SK-N-SH (cell line): ENCODE measurements at regions of chr12 and their contacts with region 1.

Region 1: GRCh38 chr12:52884526-52885293 is 20.2 kb downstream of the KRT8 start:
- DNase-seq: peak; percentile 86
- H3K4me3 ChIP-seq: no peak overlapping the region; a peak in 1 of 4 replicates
- H3K27ac ChIP-seq: no peak overlapping the region
- H3K4me1 ChIP-seq: no peaks in the 10 kb centered on the region; a peak in 1 of 4 replicates
- H3K27me3 ChIP-seq: no peaks in the 10 kb centered on the region
- CTCF ChIP-seq: peak; percentile 98
- EP300 ChIP-seq: no peak
- RAD21 ChIP-seq: peak; percentile 93

Region 2: GRCh38 chr12:52380271-52380694 is 504.4 kb before region 1 on chr12:
- CTCF ChIA-PET with region 1: interaction called, 58 read pairs
- POLR2A ChIA-PET with region 1: no interaction called
- DNase-seq: peak; percentile 53
- H3K4me3 ChIP-seq: no peak overlapping the region
- H3K27ac ChIP-seq: no peak overlapping the region
- H3K4me1 ChIP-seq: no peaks in the 10 kb centered on the region; a peak in 1 of 4 replicates
- H3K27me3 ChIP-seq: peaks cover 75% of the 10 kb centered on the region
- CTCF ChIP-seq: peak; percentile 68
- EP300 ChIP-seq: no peak
- RAD21 ChIP-seq: peak; percentile 47

Region 3: GRCh38 chr12:52865090-52865944 is 19.4 kb before region 1 on chr12:
- CTCF ChIA-PET with region 1: interaction called, 30 read pairs
- POLR2A ChIA-PET with region 1: no interaction called
- DNase-seq: peak; percentile 87
- H3K4me3 ChIP-seq: peak overlapping the region in 1 of 2 experiments; percentile 17; a peak in 1 of 4 replicates
- H3K27ac ChIP-seq: no peak overlapping the region
- H3K4me1 ChIP-seq: no peaks in the 10 kb centered on the region; a peak in 1 of 4 replicates
- H3K27me3 ChIP-seq: peaks cover 12% of the 10 kb centered on the region; the same call in 1 of the 2 replicates
- CTCF ChIP-seq: peak; percentile 78
- EP300 ChIP-seq: no peak
- RAD21 ChIP-seq: peak; percentile 69

Region 4: GRCh38 chr12:52910248-52910883 is 25.7 kb after region 1 on chr12:
- CTCF ChIA-PET with region 1: interaction called, 17 read pairs
- POLR2A ChIA-PET with region 1: no interaction called
- DNase-seq: no peak
- H3K4me3 ChIP-seq: no peak overlapping the region
- H3K27ac ChIP-seq: no peak overlapping the region
- H3K4me1 ChIP-seq: peaks cover 4 to 25% of the 10 kb centered on the region in 2 experiments; a peak in 2 of 4 replicates
- H3K27me3 ChIP-seq: no peaks in the 10 kb centered on the region
- CTCF ChIP-seq: no peak
- EP300 ChIP-seq: no peak
- RAD21 ChIP-seq: no peak

Region 5: DNA sequence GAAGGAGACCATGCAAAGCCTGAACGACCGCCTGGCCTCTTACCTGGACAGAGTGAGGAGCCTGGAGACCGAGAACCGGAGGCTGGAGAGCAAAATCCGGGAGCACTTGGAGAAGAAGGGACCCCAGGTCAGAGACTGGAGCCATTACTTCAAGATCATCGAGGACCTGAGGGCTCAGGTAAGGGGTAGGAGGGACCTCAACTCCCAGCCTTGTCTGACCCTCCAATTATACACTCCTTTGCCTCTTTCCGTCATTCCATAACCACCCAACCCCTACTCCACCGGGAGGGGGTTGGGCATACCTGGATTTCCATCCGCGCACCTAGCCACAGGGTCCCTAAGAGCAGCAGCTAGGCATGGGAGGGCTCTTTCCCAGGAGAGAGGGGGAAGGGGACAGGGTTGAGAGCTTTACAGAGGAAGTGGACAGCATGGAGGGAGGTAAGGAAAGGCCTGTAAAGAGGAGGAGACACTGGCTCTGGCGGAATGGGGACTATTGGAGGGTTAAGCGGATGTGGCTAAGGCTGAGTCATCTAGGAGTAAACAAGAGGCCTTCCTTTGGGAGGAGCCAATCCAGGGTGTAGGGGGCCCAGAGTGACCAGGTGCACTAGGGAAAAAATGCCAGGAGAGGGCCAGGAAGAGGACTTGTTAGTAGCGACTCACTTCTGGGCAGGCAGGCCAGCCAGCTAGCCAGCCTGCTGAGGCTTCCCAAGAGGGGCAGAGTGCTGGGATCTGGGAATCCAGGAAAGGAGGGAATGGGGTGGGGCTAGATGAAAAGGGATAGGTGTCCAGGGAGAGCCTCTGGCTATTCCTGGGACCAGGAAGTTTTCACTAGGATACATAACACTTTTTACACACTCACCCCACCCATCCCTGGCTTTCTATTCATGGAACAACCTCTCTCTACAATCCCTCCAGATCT is 65.0 kb after region 1 on chr12:
- CTCF ChIA-PET with region 1: interaction called, 15 read pairs
- POLR2A ChIA-PET with region 1: no interaction called
- DNase-seq: no peak
- H3K4me3 ChIP-seq: peak overlapping the region; percentile 49 to 85
- H3K27ac ChIP-seq: peak overlapping the region in 1 of 2 experiments; percentile 82; a peak in 2 of 4 replicates
- H3K4me1 ChIP-seq: peaks cover 0 to 32% of the 10 kb centered on the region in 2 experiments; a peak in 2 of 4 replicates
- H3K27me3 ChIP-seq: no peaks in the 10 kb centered on the region
- CTCF ChIP-seq: no peak
- EP300 ChIP-seq: no peak
- RAD21 ChIP-seq: no peak

Region 6: DNA sequence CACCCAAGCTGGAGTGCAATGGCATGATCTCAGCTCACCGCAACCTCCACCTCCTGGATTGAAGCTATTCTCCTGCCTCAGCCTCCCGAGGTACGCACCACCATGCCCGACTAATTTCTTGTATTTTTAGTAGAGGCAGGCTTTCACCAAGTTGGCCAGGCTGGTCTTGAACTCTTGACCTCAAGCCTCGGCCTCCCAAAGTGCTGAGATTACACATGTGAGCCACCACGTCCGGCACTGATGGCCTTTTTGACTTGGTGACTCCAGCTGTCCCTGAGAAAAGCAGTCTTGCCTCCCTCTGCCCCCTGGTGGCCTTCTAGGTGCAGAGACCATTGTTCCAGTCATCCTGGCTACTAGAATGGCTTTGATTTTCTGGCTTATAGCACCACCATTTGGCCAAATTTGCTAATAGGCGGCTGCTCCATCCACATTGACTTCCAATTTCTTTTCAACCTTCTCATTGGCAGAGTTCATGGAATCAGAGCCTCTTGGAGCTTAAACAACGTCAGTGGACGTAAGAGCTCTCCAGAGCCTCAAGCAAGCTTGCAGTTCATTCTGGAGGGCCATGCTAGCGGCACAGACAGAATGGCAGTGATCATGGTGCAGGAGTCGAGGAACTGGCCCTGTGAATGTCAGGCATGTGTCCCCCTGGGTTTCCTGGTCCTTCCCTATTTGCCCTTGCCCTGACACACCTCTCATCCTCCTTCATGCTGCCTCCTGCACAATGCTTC is 96.1 kb after region 1 on chr12:
- CTCF ChIA-PET with region 1: interaction called, 485 read pairs
- POLR2A ChIA-PET with region 1: interaction called, 3 read pairs
- DNase-seq: peak; percentile 83
- H3K4me3 ChIP-seq: peak overlapping the region in 1 of 2 experiments; percentile 6; a peak in 1 of 4 replicates
- H3K27ac ChIP-seq: no peak overlapping the region
- H3K4me1 ChIP-seq: peaks cover 0 to 12% of the 10 kb centered on the region in 2 experiments; a peak in 2 of 4 replicates
- H3K27me3 ChIP-seq: no peaks in the 10 kb centered on the region
- CTCF ChIP-seq: peak; percentile 100
- EP300 ChIP-seq: no peak
- RAD21 ChIP-seq: peak; percentile 99

Region 7: DNA sequence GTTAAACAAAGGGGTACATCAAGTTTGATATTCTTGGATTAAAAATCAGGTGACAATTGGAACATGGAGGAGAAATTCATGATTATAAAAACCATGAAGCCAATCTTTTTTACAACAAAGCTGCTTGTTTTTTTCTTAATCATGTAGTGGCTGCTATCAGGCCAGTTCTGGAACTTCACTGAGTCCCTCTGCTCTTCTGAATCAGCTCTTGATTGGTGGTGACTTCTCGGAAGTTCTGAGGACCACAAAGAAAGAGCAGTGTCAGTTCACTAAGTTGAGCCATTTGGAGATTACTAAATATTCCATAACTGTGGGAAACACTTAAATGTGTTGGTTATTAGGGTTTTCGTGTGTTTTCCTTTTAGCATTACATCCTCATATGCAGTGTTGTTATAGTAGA is 130.0 kb after region 1 on chr12:
- CTCF ChIA-PET with region 1: no interaction called
- POLR2A ChIA-PET with region 1: no interaction called
- DNase-seq: no peak
- H3K4me3 ChIP-seq: no peak overlapping the region
- H3K27ac ChIP-seq: no peak overlapping the region
- H3K4me1 ChIP-seq: no peaks in the 10 kb centered on the region; a peak in 2 of 4 replicates
- H3K27me3 ChIP-seq: no peaks in the 10 kb centered on the region
- CTCF ChIP-seq: no peak
- EP300 ChIP-seq: no peak
- RAD21 ChIP-seq: no peak

Region 8: GRCh38 chr12:53047221-53048042 is 162.7 kb after region 1 on chr12:
- CTCF ChIA-PET with region 1: interaction called, 12 read pairs
- POLR2A ChIA-PET with region 1: no interaction called
- DNase-seq: peak; percentile 95
- H3K4me3 ChIP-seq: peak overlapping the region; percentile 73 to 75
- H3K27ac ChIP-seq: peak overlapping the region; percentile 95 to 98
- H3K4me1 ChIP-seq: peaks cover 29 to 63% of the 10 kb centered on the region in 2 experiments
- H3K27me3 ChIP-seq: no peaks in the 10 kb centered on the region
- CTCF ChIP-seq: no peak
- EP300 ChIP-seq: peak in 1 of 2 experiments; percentile 53; a peak in 1 of 4 replicates
- RAD21 ChIP-seq: no peak